ENCODE measurements at regions of chr12 and their contacts with region 1.

Region 1: GRCh38 chr12:53701518-53702260 is 25.6 kb downstream of the CALCOCO1 start:
- DNase-seq: no peak
- H3K4me3 ChIP-seq: no peak overlapping the region
- H3K27ac ChIP-seq: no peak overlapping the region
- H3K4me1 ChIP-seq: peaks cover 9% of the 10 kb centered on the region
- H3K27me3 ChIP-seq: no peaks in the 10 kb centered on the region
- CTCF ChIP-seq: peak; percentile 66 to 86 (median 84)
- POLR2A ChIP-seq: no peak

Region 2: DNA sequence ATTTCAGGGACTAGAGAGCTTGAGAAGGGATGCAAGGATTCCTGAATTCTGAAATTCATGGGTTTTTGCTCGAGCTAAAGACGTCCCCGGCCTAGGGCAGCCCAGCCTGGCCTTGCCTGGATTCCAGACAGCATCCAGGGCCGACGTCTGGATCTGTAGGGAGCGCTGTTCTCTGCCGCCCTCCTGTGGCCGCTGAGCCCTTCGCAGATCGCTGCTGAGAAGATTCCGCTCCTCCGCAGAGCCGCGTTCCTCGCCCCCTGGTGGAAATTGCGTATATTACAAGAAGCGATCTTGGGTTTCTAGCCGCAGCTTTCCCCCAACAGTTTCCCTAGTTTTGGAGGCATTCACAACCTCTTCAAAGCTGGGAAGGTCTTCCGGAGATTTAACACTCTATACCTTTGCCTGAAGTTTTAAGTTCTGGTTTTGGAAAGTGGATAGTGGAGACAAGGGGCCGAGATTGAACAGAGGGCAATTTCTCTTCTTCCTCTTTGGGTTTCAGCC is 45.0 kb after region 1 on chr12:
- intact Hi-C with region 1: loop called (anchors 2 kb)
- DNase-seq: no peak
- H3K4me3 ChIP-seq: no peak overlapping the region
- H3K27ac ChIP-seq: no peak overlapping the region
- H3K4me1 ChIP-seq: peaks cover 14% of the 10 kb centered on the region
- H3K27me3 ChIP-seq: no peaks in the 10 kb centered on the region
- CTCF ChIP-seq: peak; percentile 99 to 100 (median 100)
- POLR2A ChIP-seq: no peak